ENCODE measurements at regions of chr9 and their contacts with region 1.

Region 1: DNA sequence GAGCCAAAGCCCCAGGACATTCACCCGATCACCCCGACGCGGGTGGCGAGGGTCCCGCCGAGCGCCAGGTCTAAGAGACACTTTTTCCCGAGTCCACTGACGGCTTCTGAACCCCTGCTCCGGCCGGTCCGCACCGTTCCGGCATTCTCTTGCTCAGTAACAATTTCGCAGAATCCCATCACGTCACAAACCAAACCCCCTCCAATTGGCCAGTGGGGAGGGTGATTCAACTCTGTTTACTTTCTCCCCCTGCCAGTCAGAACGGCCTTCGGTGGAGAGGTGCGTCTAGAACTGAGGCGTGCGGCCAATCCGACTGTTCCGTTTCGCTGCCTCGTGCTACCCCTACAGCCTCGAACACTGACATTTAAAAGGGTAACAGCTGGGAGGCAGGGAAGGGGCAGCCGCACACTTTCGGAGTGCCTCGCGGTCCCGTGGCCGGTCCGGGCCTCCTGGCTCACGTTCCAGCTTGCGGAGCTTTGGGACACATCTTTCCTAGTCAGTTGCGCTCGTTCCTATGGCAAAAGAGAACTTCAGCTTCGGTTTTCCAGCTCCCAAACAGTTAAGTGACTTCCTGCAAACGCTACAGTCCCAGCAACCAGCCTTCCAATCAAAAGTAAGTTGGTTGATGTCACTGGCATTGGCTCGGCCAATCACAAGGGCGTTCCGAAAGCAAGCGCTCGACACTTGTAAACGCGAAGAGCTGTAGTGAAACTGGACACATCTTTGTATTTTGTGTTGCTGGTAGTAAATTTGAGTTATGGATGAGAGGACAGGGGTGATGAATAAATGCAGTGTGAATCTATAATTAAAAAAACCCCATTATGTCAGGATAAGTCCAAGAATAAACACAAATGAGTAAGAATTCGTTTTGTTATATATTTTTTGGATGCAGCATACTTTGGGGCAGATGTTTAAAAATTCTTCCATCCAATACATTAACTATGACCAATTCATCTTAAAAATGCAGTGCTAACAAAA is at the start of gene KLF9:
- DNase-seq: peak; percentile 76 to 97 (median 96)
- ATAC-seq: peak; percentile 89
- H3K4me3 ChIP-seq: peak within 1 kb of the TSS; percentile 42
- H3K4me3 Mint-ChIP-seq: peak within 1 kb of the TSS; percentile 91 to 100 (median 96)
- H3K27ac ChIP-seq: peak within 1 kb of the TSS; percentile 99
- H3K27ac Mint-ChIP-seq: peak within 1 kb of the TSS; percentile 99 to 100 (median 100)
- H3K4me1 ChIP-seq: peaks cover 37 to 39% of the 10 kb centered on the region in 2 donors
- H3K4me1 Mint-ChIP-seq: peaks cover 12 to 63% (median 45%) of the 10 kb centered on the region in 7 donors
- H3K27me3 ChIP-seq: no peaks in the 10 kb centered on the region
- H3K27me3 Mint-ChIP-seq: peaks cover 0 to 3% (median 0%) of the 10 kb centered on the region in 5 donors
- total RNA-seq, gene KLF9: 12.6 to 96.7 (median 23.3) TPM

Region 2: DNA sequence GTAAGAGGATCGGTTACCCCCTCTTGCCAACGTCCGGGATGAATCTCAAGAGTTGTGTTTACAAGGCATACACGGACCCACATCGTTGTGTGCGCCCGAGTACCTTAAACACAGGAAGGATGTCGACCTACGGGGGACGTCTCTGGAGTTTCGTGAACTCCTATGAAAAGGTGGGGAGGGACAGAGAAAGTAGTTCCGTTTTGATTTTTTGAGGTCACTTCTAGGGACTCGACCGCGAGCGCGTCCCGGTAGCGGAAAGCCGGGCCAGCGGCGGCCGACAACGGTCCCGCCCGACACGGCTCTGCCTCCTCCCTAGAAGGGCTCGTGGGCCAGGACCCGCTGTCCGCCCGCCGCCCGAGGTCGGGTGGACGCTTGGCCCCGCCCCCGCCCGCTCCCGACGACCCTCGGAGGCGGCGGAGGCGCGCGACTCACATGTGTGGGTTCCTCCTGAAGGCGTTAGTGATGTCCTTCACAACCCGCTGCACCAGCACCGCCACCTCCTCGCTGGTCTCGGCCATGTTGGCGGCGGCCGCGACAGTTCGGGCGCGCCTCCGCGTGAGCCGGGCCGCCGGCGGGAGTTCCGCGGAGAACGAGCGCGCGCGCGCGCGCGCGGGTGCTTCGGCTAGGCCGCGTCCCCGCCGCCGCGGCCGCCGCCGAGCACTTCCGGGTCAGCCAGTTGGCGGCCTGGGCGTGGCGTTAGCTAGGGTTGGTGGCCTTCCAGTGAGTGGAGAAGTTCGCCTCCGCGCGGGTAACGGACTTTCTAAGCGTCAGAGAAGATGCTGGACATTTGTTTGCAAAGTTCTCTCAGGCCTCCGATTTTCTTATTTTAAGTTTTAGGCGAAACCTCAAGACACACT is 654.4 kb before region 1 on chr9 and contains the start of gene PTAR1:
- CTCF ChIA-PET with region 1: no interaction called
- POLR2A ChIA-PET with region 1: interaction called, 3 read pairs
- intact Hi-C with region 1: loop called (anchors 5 kb)
- DNase-seq: peak; percentile 80 to 95 (median 89)
- ATAC-seq: peak; percentile 93
- H3K4me3 ChIP-seq: peak within 1 kb of the TSS; percentile 76
- H3K4me3 Mint-ChIP-seq: peak within 1 kb of the TSS; percentile 87 to 99 (median 96)
- H3K27ac ChIP-seq: peak within 1 kb of the TSS; percentile 93
- H3K27ac Mint-ChIP-seq: peak within 1 kb of the TSS; percentile 85 to 98 (median 94)
- H3K4me1 ChIP-seq: peaks cover 7 to 16% of the 10 kb centered on the region in 2 donors
- H3K4me1 Mint-ChIP-seq: peaks cover 14 to 51% (median 35%) of the 10 kb centered on the region in 7 donors
- H3K27me3 ChIP-seq: no peaks in the 10 kb centered on the region
- H3K27me3 Mint-ChIP-seq: no peaks in the 10 kb centered on the region
- total RNA-seq, gene PTAR1: 59.6 to 82.4 (median 65.7) TPM

Region 3: GRCh38 chr9:70340572-70340971 is 73.5 kb before region 1 on chr9:
- CTCF ChIA-PET with region 1: no interaction called
- POLR2A ChIA-PET with region 1: interaction called, 3 read pairs
- intact Hi-C with region 1: loop called in 1 of 2 experiments (anchors 2 kb)
- DNase-seq: peak in 5 of 9 donors; percentile 8 to 36 (median 24)
- ATAC-seq: no peak
- H3K4me3 ChIP-seq: no peak overlapping the region
- H3K4me3 Mint-ChIP-seq: no peak overlapping the region
- H3K27ac ChIP-seq: no peak overlapping the region
- H3K27ac Mint-ChIP-seq: no peak overlapping the region
- H3K4me1 ChIP-seq: no peaks in the 10 kb centered on the region
- H3K4me1 Mint-ChIP-seq: peaks cover 0 to 12% (median 4%) of the 10 kb centered on the region in 7 donors
- H3K27me3 ChIP-seq: no peaks in the 10 kb centered on the region
- H3K27me3 Mint-ChIP-seq: no peaks in the 10 kb centered on the region

Region 4: GRCh38 chr9:70398145-70398556 is 15.9 kb before region 1 on chr9:
- CTCF ChIA-PET with region 1: interaction called, 6 read pairs
- POLR2A ChIA-PET with region 1: interaction called, 138 read pairs
- intact Hi-C with region 1: loop called (anchors 1 kb)
- DNase-seq: peak in 6 of 9 donors; percentile 45 to 69 (median 56)
- ATAC-seq: peak; percentile 95
- H3K4me3 ChIP-seq: peak overlapping the region; percentile 3
- H3K4me3 Mint-ChIP-seq: peak overlapping the region; percentile 13 to 85 (median 74)
- H3K27ac ChIP-seq: peak overlapping the region; percentile 50
- H3K27ac Mint-ChIP-seq: peak overlapping the region; percentile 49 to 91 (median 84)
- H3K4me1 ChIP-seq: peaks cover 40 to 68% of the 10 kb centered on the region in 2 donors
- H3K4me1 Mint-ChIP-seq: peaks cover 50 to 88% (median 78%) of the 10 kb centered on the region in 7 donors
- H3K27me3 ChIP-seq: no peaks in the 10 kb centered on the region
- H3K27me3 Mint-ChIP-seq: no peaks in the 10 kb centered on the region

Region 5: DNA sequence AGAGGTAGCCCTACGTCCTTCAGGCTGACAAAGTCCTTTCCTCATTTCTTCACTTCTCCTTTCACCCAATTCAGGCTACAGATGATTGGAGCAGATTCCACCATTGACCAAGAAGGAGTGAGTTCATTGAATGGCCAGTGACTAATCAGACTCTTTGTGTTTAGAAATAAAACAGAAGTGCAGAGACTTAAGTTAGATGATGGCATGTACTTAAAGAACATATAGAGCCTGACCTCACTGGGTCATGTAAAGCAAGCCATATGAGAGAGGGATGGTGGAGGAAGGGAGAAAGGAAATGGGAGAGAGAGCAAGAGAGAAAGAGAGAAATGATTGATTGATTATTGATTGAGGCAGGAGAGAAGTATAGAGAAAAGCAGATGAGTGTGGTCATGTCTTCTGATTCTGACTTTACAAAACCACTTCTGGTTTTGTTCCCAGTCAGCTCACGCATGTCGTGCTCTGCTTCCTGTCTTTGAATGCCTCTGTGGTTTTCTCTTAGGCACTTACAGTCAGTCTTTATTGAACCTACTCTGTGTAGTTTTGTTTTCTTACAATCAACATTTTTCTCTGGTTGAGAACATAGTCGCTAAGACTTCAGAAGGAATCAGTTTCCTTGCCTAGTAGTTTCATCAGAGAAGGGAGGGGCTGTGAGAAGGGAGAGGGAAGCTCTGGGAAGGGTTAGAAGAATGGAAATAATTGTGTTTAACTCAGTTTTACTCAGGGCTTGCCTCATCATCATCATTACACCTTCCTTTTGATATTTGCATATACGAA is 149.5 kb after region 1 on chr9:
- CTCF ChIA-PET with region 1: no interaction called
- POLR2A ChIA-PET with region 1: interaction called, 45 read pairs
- intact Hi-C with region 1: loop called (anchors 1 kb)
- DNase-seq: peak in 8 of 9 donors; percentile 45 to 86 (median 78)
- ATAC-seq: peak; percentile 93
- H3K4me3 ChIP-seq: peak overlapping the region; percentile 15
- H3K4me3 Mint-ChIP-seq: peak overlapping the region; percentile 45 to 85 (median 68)
- H3K27ac ChIP-seq: peak overlapping the region; percentile 67
- H3K27ac Mint-ChIP-seq: peak overlapping the region; percentile 85 to 98 (median 95)
- H3K4me1 ChIP-seq: peaks cover 17 to 34% of the 10 kb centered on the region in 2 donors
- H3K4me1 Mint-ChIP-seq: peaks cover 33 to 66% (median 53%) of the 10 kb centered on the region in 7 donors
- H3K27me3 ChIP-seq: no peaks in the 10 kb centered on the region
- H3K27me3 Mint-ChIP-seq: no peaks in the 10 kb centered on the region

Region 6: GRCh38 chr9:71795097-71795813 is 1381.2 kb after region 1 on chr9:
- CTCF ChIA-PET with region 1: no interaction called
- POLR2A ChIA-PET with region 1: interaction called, 8 read pairs
- intact Hi-C with region 1: loop called in 1 of 2 experiments (anchors 5 kb)
- DNase-seq: peak in 7 of 9 donors; percentile 68 to 90 (median 85)
- ATAC-seq: peak; percentile 92
- H3K4me3 ChIP-seq: peak overlapping the region; percentile 17
- H3K4me3 Mint-ChIP-seq: peak overlapping the region; percentile 26 to 90 (median 76)
- H3K27ac ChIP-seq: peak overlapping the region; percentile 71
- H3K27ac Mint-ChIP-seq: peak overlapping the region; percentile 91 to 99 (median 96)
- H3K4me1 ChIP-seq: peaks cover 36 to 63% of the 10 kb centered on the region in 2 donors
- H3K4me1 Mint-ChIP-seq: peaks cover 44 to 87% (median 76%) of the 10 kb centered on the region in 7 donors
- H3K27me3 ChIP-seq: no peaks in the 10 kb centered on the region
- H3K27me3 Mint-ChIP-seq: no peaks in the 10 kb centered on the region

Region 7: GRCh38 chr9:72060513-72060912 is 1646.4 kb after region 1 on chr9 and contains the start of gene C9orf57:
- CTCF ChIA-PET with region 1: no interaction called
- POLR2A ChIA-PET with region 1: no interaction called
- intact Hi-C with region 1: no loop called
- DNase-seq: no peak
- ATAC-seq: no peak
- H3K4me3 ChIP-seq: no peak within 1 kb of the TSS
- H3K4me3 Mint-ChIP-seq: no peak within 1 kb of the TSS
- H3K27ac ChIP-seq: no peak within 1 kb of the TSS
- H3K27ac Mint-ChIP-seq: no peak within 1 kb of the TSS
- H3K4me1 ChIP-seq: no peaks in the 10 kb centered on the region
- H3K4me1 Mint-ChIP-seq: no peaks in the 10 kb centered on the region
- H3K27me3 ChIP-seq: no peaks in the 10 kb centered on the region
- H3K27me3 Mint-ChIP-seq: peaks cover 0 to 31% (median 17%) of the 10 kb centered on the region in 5 donors
- total RNA-seq, gene C9orf57: not detected